ENCODE measurements at regions of chr11 and their contacts with region 1.

Region 1: GRCh38 chr11:61446211-61446651 is 16.3 kb downstream of the SDHAF2 start:
- DNase-seq: peak; percentile 78
- H3K4me3 ChIP-seq: no peak overlapping the region; a peak in 1 of 4 replicates
- H3K27ac ChIP-seq: peak overlapping the region; percentile 45 to 53; a peak in 3 of 4 replicates
- H3K4me1 ChIP-seq: peaks cover 5 to 13% of the 10 kb centered on the region in 2 experiments; a peak in 2 of 4 replicates
- H3K27me3 ChIP-seq: no peaks in the 10 kb centered on the region
- CTCF ChIP-seq: peak; percentile 94
- EP300 ChIP-seq: no peak
- RAD21 ChIP-seq: peak; percentile 88

Region 2: DNA sequence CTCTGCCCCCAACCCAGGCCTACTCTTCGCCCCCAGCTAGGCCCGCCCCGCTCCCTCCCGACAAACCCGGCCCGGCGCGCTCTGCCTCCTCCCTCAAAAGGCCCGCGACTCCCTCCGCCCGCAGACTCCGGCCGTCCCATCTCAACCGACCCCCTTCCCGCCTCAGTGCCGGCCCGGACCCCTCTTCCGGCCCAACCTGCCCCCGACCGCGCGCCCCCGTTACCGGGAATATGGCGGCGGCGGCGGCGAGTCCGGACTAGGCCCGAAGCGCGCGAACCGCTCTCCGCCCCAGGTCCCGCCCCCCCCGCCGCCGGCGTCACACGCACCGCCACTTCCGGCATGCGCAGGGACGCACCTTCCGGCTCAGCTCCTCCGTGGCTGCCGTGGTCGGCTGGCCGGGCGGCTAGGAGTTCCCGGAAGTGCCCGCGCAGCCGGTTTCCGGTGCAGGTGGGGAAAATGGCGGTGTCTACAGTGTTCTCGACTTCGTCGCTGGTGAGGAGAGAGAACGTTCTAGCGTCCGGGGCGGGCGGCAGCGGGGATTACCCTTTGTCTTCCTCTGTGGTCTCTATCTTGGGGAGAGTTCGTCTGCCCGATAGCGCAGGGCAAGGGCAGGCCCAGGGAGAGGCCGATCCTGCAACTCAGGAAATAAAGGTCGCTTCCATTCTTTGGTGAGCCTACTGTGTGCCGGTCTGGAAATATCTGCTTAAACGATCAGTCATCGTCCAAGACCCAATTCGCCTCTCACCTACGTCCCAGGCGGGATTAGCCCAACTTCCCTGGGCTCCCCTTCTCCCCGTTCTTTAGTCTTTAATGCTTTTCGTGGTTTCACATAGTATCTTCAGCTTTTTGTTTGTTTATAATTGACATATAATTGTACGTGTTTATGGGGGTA is 16.3 kb before region 1 on chr11 and contains the starts of genes CPSF7 and SDHAF2:
- CTCF ChIA-PET with region 1: interaction called, 109 read pairs
- POLR2A ChIA-PET with region 1: interaction called, 6 read pairs
- DNase-seq: peak; percentile 96
- H3K4me3 ChIP-seq: peak within 1 kb of the TSS; percentile 87 to 95
- H3K27ac ChIP-seq: peak within 1 kb of the TSS; percentile 93 to 96
- H3K4me1 ChIP-seq: peaks cover 9 to 14% of the 10 kb centered on the region in 2 experiments
- H3K27me3 ChIP-seq: no peaks in the 10 kb centered on the region
- CTCF ChIP-seq: no peak
- EP300 ChIP-seq: no peak
- RAD21 ChIP-seq: no peak
- polyA plus RNA-seq, gene CPSF7: 44.0 and 49.4 TPM in 2 replicates
- polyA plus RNA-seq, gene SDHAF2: 81.7 and 116 TPM in 2 replicates

Region 3: GRCh38 chr11:61509043-61510029 is 63.1 kb after region 1 on chr11:
- CTCF ChIA-PET with region 1: interaction called, 43 read pairs
- POLR2A ChIA-PET with region 1: interaction called, 3 read pairs
- DNase-seq: peak; percentile 92
- H3K4me3 ChIP-seq: peak overlapping the region in 1 of 2 experiments; percentile 29; a peak in 2 of 4 replicates
- H3K27ac ChIP-seq: no peak overlapping the region; a peak in 1 of 4 replicates
- H3K4me1 ChIP-seq: peaks cover 0 to 49% of the 10 kb centered on the region in 2 experiments; a peak in 3 of 4 replicates
- H3K27me3 ChIP-seq: peaks cover 32% of the 10 kb centered on the region
- CTCF ChIP-seq: peak; percentile 36; the same call in 1 of the 2 replicates
- EP300 ChIP-seq: no peak
- RAD21 ChIP-seq: peak; percentile 54

Region 4: GRCh38 chr11:61532139-61533038 is 86.2 kb after region 1 on chr11:
- CTCF ChIA-PET with region 1: interaction called, 16 read pairs
- POLR2A ChIA-PET with region 1: interaction called, 3 read pairs
- DNase-seq: peak; percentile 69
- H3K4me3 ChIP-seq: no peak overlapping the region; a peak in 1 of 4 replicates
- H3K27ac ChIP-seq: peak overlapping the region in 1 of 2 experiments; percentile 91; a peak in 2 of 4 replicates
- H3K4me1 ChIP-seq: peaks cover 0 to 100% of the 10 kb centered on the region in 2 experiments; a peak in 2 of 4 replicates
- H3K27me3 ChIP-seq: no peaks in the 10 kb centered on the region
- CTCF ChIP-seq: peak; percentile 76
- EP300 ChIP-seq: no peak
- RAD21 ChIP-seq: peak; percentile 42

Region 5: DNA sequence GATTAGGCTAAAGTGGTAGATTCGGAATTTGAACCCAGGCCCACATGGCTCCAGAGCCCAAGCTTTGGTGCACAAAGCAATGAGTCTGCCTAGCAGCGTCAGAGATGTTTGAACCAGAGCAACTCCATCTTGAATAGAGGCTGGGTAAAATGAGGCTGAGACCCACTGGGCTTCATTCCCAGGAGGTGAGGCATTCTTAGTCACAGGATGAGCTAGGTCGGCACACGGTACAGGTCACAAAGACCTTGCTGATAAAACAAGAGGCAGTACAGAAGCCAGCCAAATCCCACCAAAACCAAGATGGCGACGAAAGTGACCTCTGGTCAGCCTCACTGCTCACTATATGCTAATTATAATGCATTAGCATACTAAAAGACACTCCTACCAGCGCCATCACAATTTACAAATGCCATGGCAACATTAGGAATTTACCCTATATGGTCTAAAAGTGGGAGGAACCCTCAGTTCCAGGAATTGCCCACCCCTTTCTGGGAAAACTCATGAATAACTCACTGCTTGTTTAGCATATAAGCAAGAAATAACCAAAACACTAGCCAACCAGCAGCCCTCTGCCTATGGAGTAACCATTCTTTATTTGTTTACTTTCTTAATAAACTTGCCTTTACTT is 193.7 kb after region 1 on chr11:
- CTCF ChIA-PET with region 1: interaction called, 53 read pairs
- POLR2A ChIA-PET with region 1: interaction called, 3 read pairs
- DNase-seq: no peak
- H3K4me3 ChIP-seq: no peak overlapping the region
- H3K27ac ChIP-seq: no peak overlapping the region
- H3K4me1 ChIP-seq: peaks cover 0 to 2% of the 10 kb centered on the region in 2 experiments; a peak in 1 of 4 replicates
- H3K27me3 ChIP-seq: no peaks in the 10 kb centered on the region; the same call in 1 of the 2 replicates
- CTCF ChIP-seq: no peak
- EP300 ChIP-seq: no peak
- RAD21 ChIP-seq: no peak

Region 6: DNA sequence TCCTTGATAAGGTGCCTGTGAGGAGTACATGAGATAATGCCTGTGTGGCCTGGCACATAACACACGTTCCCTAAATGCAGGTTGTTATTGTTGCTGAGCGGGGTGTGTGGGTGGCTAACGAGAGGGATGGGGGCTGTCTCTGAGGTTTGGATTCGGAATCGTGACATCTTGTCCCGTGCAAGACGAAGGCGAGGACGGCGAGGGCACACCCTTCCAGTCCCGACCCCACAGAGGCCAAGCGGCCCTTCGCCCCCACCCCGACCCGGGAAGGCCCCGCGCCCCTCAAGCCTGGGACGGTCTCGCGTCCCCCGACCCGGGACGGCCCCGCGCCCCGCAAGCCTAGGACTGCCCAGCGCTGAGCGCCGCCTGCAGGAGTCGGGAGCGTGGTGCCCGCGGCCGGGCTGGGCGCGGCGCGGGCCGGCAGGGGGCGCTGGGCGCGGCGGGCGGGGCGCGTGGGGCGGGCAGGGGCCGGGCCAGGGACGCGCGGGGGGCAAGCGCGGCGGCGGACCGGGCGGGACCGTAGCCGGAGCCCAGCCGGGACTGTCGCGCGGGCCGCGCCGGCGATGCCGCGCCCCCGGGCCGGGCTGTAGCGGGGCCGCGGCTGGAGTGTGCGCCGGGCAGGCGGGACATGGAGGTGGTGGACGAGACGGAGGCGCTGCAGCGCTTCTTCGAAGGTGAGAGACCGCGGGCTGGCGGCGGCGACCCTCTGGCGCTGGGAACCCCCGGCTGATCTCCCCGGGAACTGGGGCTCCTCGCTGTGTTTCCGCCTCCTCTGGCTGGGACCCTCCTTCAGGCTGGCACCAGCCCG is 306.1 kb after region 1 on chr11 and contains the start of gene MYRF:
- CTCF ChIA-PET with region 1: no interaction called
- POLR2A ChIA-PET with region 1: no interaction called
- DNase-seq: peak; percentile 95
- H3K4me3 ChIP-seq: peak within 1 kb of the TSS; percentile 52 to 64
- H3K27ac ChIP-seq: no peak within 1 kb of the TSS
- H3K4me1 ChIP-seq: peaks cover 9 to 18% of the 10 kb centered on the region in 2 experiments; a peak in 2 of 4 replicates
- H3K27me3 ChIP-seq: no peaks in the 10 kb centered on the region
- CTCF ChIP-seq: peak; percentile 59
- EP300 ChIP-seq: no peak
- RAD21 ChIP-seq: peak; percentile 25; the same call in 1 of the 2 replicates
- polyA plus RNA-seq, gene MYRF: 1.8 and 2.8 TPM in 2 replicates

Measured in SK-N-SH (cell line).